GM12878 (cell line): ENCODE measurements at regions of chr12 and their contacts with region 1.

Region 1: DNA sequence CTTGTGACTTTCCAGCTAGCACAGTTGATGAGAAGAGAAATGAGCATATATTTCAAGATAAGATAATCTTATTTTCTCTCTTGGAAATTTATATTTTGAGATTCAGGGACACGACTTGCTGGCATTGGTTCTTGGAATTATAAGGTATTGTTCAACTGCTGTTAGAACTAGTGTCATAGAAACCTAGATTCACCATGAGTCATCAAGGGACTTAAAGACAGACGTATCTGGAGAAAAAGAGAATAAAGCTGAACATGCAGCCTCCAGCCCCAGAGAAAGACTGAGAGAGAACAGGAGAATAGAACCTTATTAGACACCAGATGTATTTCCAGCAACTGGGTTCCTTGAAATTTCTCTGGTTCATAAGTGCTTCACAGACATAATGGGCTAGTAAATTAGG is 194.4 kb upstream of the PPFIA2 start:
- DNase-seq: no peak
- ATAC-seq: peak; percentile 48
- H3K4me3 ChIP-seq: no peak overlapping the region
- H3K27ac ChIP-seq: no peak overlapping the region
- H3K4me1 ChIP-seq: no peaks in the 10 kb centered on the region
- H3K27me3 ChIP-seq: no peaks in the 10 kb centered on the region
- CTCF ChIP-seq: no peak
- EP300 ChIP-seq: no peak
- POLR2A ChIP-seq: no peak
- RAD21 ChIP-seq: no peak

Region 2: GRCh38 chr12:80118565-80119324 is 1834.8 kb before region 1 on chr12:
- CTCF ChIA-PET with region 1: no interaction called
- POLR2A ChIA-PET with region 1: no interaction called
- RAD21 ChIA-PET with region 1: no interaction called
- SMC1A ChIA-PET with region 1: no interaction called
- in situ Hi-C with region 1: no loop called
- intact Hi-C with region 1: no loop called
- DNase-seq: no peak
- ATAC-seq: no peak
- H3K4me3 ChIP-seq: no peak overlapping the region
- H3K27ac ChIP-seq: no peak overlapping the region
- H3K4me1 ChIP-seq: no peaks in the 10 kb centered on the region
- H3K27me3 ChIP-seq: no peaks in the 10 kb centered on the region
- CTCF ChIP-seq: no peak
- EP300 ChIP-seq: no peak
- POLR2A ChIP-seq: no peak
- RAD21 ChIP-seq: no peak

Region 3: DNA sequence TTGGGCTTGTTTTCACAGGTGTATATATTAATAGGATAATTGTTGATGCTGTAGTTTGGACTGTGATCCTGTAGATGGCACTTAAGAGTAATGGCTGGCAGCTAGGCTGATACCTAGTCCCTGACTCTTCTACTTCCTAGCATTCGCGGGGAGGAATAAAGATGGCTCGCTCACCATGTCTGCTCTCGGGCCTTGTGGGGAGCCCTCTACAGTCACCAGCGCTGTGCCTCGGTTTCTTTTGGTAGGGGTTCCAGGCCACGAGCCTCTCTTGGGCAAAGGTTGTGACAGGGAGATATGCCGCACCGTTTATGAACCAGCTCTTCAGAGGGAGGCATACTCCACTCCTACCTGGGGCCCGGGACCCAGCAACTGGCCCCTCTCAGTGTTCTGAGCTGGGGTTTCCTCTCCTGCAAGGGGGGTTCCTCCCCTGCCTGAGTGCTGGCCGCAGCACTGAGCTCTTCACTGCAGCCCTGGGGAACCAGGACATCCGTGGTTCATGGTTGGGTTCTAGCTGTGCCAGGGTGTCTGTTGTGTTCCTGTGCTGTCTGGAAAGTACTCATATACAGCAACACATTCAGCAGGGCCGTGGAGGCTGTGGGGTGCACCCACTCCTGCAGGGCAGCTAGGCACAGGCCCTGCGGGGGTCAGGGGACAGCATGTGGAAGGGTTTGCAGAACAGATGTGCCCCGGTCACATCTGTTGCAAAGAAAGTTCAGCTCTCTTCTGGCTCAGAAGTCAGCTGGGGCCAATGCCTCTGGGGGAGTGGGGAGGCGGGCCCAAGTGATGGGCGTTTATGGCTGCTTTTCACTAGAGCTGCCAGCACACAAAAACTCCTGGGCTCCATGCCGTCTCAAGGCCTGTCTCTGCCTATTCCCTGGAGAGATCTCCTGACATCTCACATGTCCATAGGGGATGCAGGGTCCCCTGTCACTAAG is 342.3 kb before region 1 on chr12:
- CTCF ChIA-PET with region 1: no interaction called
- POLR2A ChIA-PET with region 1: no interaction called
- RAD21 ChIA-PET with region 1: no interaction called
- SMC1A ChIA-PET with region 1: no interaction called
- in situ Hi-C with region 1: no loop called
- intact Hi-C with region 1: no loop called
- DNase-seq: no peak
- ATAC-seq: peak; percentile 98
- H3K4me3 ChIP-seq: no peak overlapping the region
- H3K27ac ChIP-seq: no peak overlapping the region
- H3K4me1 ChIP-seq: no peaks in the 10 kb centered on the region
- H3K27me3 ChIP-seq: no peaks in the 10 kb centered on the region
- CTCF ChIP-seq: peak; percentile 34 to 57 (median 54); a peak in 4 of 6 replicates
- EP300 ChIP-seq: no peak
- POLR2A ChIP-seq: no peak
- RAD21 ChIP-seq: 0 out of 2 replicates have a peak, but pooled peaks have one; percentile 19

Region 4: GRCh38 chr12:81722004-81722403 is 231.5 kb before region 1 on chr12:
- CTCF ChIA-PET with region 1: no interaction called
- POLR2A ChIA-PET with region 1: no interaction called
- RAD21 ChIA-PET with region 1: no interaction called
- SMC1A ChIA-PET with region 1: no interaction called
- in situ Hi-C with region 1: no loop called
- intact Hi-C with region 1: no loop called
- DNase-seq: no peak
- ATAC-seq: no peak
- H3K4me3 ChIP-seq: no peak overlapping the region
- H3K27ac ChIP-seq: no peak overlapping the region
- H3K4me1 ChIP-seq: no peaks in the 10 kb centered on the region
- H3K27me3 ChIP-seq: no peaks in the 10 kb centered on the region
- CTCF ChIP-seq: no peak
- EP300 ChIP-seq: no peak
- POLR2A ChIP-seq: no peak
- RAD21 ChIP-seq: no peak

Region 5: DNA sequence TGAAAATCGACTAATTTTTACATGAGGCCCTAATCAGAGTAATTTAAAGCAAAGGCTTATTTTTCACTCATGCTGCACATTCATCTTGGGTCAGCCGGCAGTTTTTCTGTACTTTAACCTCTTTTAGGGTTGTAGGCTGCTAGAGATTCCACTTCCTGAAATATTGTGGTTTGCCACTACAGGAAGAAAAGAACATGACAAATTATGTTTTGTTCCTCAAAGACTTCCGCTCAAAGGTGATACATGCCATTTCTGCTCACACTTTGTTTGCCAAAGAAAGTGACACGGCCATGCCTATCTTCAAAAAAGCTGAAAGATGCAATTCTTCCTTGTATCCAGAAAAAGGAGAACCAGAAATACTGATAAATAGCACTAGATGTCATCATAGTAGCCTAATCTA is 10.9 kb before region 1 on chr12:
- CTCF ChIA-PET with region 1: interaction called, 9 read pairs
- POLR2A ChIA-PET with region 1: interaction called, 54 read pairs
- RAD21 ChIA-PET with region 1: interaction called, 32 read pairs
- SMC1A ChIA-PET with region 1: interaction called, 46 read pairs
- in situ Hi-C with region 1: no loop called
- intact Hi-C with region 1: no loop called
- DNase-seq: peak; percentile 15
- ATAC-seq: peak; percentile 85
- H3K4me3 ChIP-seq: no peak overlapping the region
- H3K27ac ChIP-seq: no peak overlapping the region
- H3K4me1 ChIP-seq: no peaks in the 10 kb centered on the region
- H3K27me3 ChIP-seq: no peaks in the 10 kb centered on the region
- CTCF ChIP-seq: no peak; a peak in 1 of 6 replicates
- EP300 ChIP-seq: peak; percentile 56 to 63; a peak in 2 of 4 replicates
- POLR2A ChIP-seq: no peak
- RAD21 ChIP-seq: no peak

Region 6: DNA sequence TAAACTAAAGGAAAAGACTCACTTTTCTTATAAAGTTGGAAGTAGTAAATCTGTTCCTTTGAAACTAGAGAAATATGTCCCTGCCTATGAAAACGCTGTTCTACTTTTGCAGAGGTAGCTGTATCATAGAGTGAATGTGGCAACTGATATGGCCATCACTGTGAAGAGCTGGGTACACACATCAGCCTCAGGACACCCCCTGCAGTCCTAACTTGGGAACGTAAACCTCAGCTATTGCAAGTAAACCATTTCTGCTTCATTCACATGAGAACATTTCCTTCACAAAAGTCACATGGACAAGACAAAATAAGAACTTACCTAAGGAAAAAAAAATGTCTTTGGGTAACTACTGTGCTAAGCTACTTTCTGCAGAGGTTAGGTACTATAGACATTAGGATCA is 38.9 kb after region 1 on chr12:
- CTCF ChIA-PET with region 1: no interaction called
- POLR2A ChIA-PET with region 1: interaction called, 3 read pairs
- RAD21 ChIA-PET with region 1: interaction called, 10 read pairs
- SMC1A ChIA-PET with region 1: interaction called, 19 read pairs
- in situ Hi-C with region 1: no loop called
- intact Hi-C with region 1: no loop called
- DNase-seq: no peak
- ATAC-seq: peak; percentile 92
- H3K4me3 ChIP-seq: no peak overlapping the region
- H3K27ac ChIP-seq: no peak overlapping the region
- H3K4me1 ChIP-seq: no peaks in the 10 kb centered on the region
- H3K27me3 ChIP-seq: no peaks in the 10 kb centered on the region
- CTCF ChIP-seq: peak in 2 of 3 experiments; percentile 9 to 36; a peak in 3 of 6 replicates
- EP300 ChIP-seq: no peak
- POLR2A ChIP-seq: no peak
- RAD21 ChIP-seq: peak; percentile 10; the same call in 1 of the 2 replicates

Region 7: DNA sequence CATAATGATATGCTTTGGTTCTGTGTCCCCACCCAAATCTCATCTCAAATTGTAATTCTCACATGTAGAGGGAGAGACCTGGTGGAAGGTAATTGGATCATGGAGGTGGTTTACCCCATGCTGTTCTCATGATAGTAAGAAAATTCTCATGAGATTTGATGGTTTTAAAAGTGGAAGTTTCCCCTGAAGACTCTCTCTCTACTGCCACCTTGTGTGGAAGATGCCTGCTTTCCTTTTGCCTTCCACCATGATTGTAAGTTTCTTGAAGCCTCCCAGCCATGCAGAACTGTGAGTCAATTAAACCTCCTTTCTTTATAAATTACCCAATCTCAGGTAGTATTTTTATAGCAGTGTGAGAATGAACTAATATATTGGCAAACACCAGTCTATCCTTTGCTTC is 66.0 kb after region 1 on chr12:
- CTCF ChIA-PET with region 1: no interaction called
- POLR2A ChIA-PET with region 1: no interaction called
- RAD21 ChIA-PET with region 1: no interaction called
- SMC1A ChIA-PET with region 1: no interaction called
- in situ Hi-C with region 1: no loop called
- intact Hi-C with region 1: loop called (anchors 5 kb)
- DNase-seq: no peak
- ATAC-seq: no peak
- H3K4me3 ChIP-seq: no peak overlapping the region
- H3K27ac ChIP-seq: no peak overlapping the region
- H3K4me1 ChIP-seq: no peaks in the 10 kb centered on the region
- H3K27me3 ChIP-seq: no peaks in the 10 kb centered on the region
- CTCF ChIP-seq: no peak
- EP300 ChIP-seq: no peak
- POLR2A ChIP-seq: no peak
- RAD21 ChIP-seq: 0 out of 2 replicates have a peak, but pooled peaks have one; percentile 14

Region 8: GRCh38 chr12:82358200-82359114 is 404.9 kb after region 1 on chr12 and contains the starts of genes CCDC59 and METTL25:
- CTCF ChIA-PET with region 1: interaction called, 4 read pairs
- POLR2A ChIA-PET with region 1: no interaction called
- RAD21 ChIA-PET with region 1: interaction called, 3 read pairs
- SMC1A ChIA-PET with region 1: no interaction called
- in situ Hi-C with region 1: no loop called
- intact Hi-C with region 1: loop called (anchors 10 kb)
- DNase-seq: peak; percentile 90
- ATAC-seq: peak; percentile 93
- H3K4me3 ChIP-seq: peak within 1 kb of the TSS; percentile 91
- H3K27ac ChIP-seq: peak within 1 kb of the TSS; percentile 99
- H3K4me1 ChIP-seq: no peaks in the 10 kb centered on the region
- H3K27me3 ChIP-seq: no peaks in the 10 kb centered on the region
- CTCF ChIP-seq: peak; percentile 60 to 96 (median 95)
- EP300 ChIP-seq: peak; percentile 73 to 87; a peak in 3 of 4 replicates
- POLR2A ChIP-seq: peak; percentile 99
- RAD21 ChIP-seq: peak; percentile 40
- polyA plus RNA-seq, gene CCDC59: 94.7 to 98.6 TPM
- polyA plus RNA-seq, gene METTL25: 6.6 to 7.0 TPM

Region 9: GRCh38 chr12:82527165-82527780 is 573.7 kb after region 1 on chr12:
- CTCF ChIA-PET with region 1: no interaction called
- POLR2A ChIA-PET with region 1: no interaction called
- RAD21 ChIA-PET with region 1: no interaction called
- SMC1A ChIA-PET with region 1: no interaction called
- in situ Hi-C with region 1: no loop called
- intact Hi-C with region 1: no loop called
- DNase-seq: no peak
- ATAC-seq: peak; percentile 80
- H3K4me3 ChIP-seq: no peak overlapping the region
- H3K27ac ChIP-seq: no peak overlapping the region
- H3K4me1 ChIP-seq: no peaks in the 10 kb centered on the region
- H3K27me3 ChIP-seq: no peaks in the 10 kb centered on the region
- CTCF ChIP-seq: peak; percentile 83 to 92 (median 84)
- EP300 ChIP-seq: no peak
- POLR2A ChIP-seq: no peak
- RAD21 ChIP-seq: peak; percentile 97